AG04449 (cell line): ENCODE measurements at regions of chr19 and their contacts with region 1.

Region 1: GRCh38 chr19:49590071-49590970 is 661 bp upstream of the PRR12 start:
- DNase-seq: peak; percentile 67
- H3K4me3 ChIP-seq: peak overlapping the region; percentile 85
- CTCF ChIP-seq: no peak

Region 2: GRCh38 chr19:49624967-49625910 is 34.9 kb after region 1 on chr19:
- CTCF ChIA-PET with region 1: no interaction called
- POLR2A ChIA-PET with region 1: no interaction called
- DNase-seq: no peak
- H3K4me3 ChIP-seq: no peak overlapping the region
- CTCF ChIP-seq: no peak

Region 3: GRCh38 chr19:49665351-49666119 is 75.2 kb after region 1 on chr19 and contains the starts of genes BCL2L12 and IRF3:
- CTCF ChIA-PET with region 1: no interaction called
- POLR2A ChIA-PET with region 1: interaction called, 13 read pairs
- DNase-seq: peak; percentile 68
- H3K4me3 ChIP-seq: peak within 1 kb of the TSS; percentile 96
- CTCF ChIP-seq: peak; percentile 4